Left cardiac atrium (tissue), 4 donors: ENCODE measurements at regions of chr10 and their contacts with region 1.

Region 1: DNA sequence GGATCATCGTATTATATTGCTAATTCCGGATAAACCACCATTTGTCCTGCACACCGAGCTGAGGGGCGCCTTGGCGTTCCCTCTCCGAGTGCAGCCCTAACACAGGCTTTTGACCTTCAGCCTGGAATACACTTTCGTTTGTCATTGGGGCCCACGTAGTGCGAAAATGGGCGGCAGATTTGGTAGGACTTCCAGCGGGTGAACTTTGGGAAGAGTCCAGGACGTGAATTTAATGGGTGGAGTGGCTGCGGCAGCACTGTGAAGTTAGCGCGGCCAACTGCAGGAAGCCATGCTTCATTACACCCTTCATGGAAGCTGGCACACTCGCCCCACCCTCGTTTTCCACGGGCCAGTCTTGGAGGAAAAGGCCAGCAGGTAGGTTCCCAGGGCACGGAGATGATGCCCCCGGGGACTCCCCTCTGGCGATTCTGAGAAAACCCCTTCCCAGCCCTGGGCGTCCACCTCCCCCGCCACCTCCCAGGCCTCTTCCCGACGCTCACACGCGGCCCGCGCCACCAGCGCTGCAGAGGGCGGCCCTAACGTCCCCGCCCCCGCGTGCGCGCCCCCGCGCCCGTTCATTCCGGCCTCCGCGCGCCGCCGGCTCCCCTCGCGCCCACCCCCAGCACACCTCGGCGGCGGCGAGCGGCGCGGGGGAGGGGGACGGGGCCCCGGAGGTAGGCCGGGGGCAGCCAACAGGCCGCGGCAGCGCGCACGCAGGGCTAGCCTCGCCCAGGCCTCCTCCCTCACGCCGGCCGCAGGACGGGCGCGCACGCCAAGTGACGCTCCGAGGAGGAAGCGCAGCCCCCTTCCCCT is at the start of gene MLLT10:
- DNase-seq: peak; percentile 95
- ATAC-seq: peak; percentile 95 to 98
- total RNA-seq, gene MLLT10: 26.1 to 30.3 TPM

Region 2: DNA sequence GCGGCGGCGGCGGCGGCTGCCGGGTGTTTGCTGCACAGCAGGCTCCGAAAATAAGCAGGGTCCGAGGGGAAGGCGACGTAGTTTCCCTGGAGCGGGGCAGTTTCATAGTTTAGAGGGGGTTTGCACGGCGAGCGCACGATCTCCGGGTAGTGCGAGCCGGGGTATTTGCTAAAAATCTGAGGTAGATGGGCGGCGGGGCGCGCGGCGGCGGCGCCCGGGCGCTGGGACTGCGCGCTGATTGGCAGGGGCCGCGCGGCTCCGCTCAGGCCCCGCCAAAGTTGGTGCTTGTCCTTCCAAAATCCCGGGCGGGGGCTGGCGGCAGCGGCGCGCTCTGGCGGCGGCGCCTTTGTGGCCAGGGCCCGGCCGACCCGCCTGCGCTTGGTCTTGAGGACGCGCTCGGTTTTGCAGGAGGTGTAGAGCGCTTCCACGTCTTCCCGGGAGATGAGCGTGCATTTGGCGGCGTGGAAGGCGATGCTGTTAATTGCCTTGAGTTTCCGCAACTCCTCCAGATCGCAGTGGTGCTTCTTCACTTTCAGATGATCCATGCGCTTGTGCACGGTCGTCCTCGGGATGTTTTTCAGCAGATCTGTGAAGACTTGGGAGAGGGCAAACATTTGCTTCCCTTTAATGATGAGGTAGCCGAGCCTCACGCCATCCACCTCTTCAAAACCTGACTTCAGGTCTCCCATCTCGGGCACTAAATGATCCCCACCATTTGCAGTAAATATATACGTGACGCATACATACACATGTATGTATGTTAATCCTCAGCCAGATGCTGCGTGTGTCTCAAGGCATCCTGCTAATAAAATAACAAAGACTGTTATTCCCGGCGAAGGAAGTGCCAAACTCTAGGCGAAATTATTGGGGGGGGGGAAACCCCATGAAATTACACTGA is 16.3 kb before region 1 on chr10:
- intact Hi-C with region 1: loop called in 1 of 2 experiments (anchors 1 kb)
- DNase-seq: peak; percentile 72
- ATAC-seq: peak; percentile 69 to 81

Region 3: DNA sequence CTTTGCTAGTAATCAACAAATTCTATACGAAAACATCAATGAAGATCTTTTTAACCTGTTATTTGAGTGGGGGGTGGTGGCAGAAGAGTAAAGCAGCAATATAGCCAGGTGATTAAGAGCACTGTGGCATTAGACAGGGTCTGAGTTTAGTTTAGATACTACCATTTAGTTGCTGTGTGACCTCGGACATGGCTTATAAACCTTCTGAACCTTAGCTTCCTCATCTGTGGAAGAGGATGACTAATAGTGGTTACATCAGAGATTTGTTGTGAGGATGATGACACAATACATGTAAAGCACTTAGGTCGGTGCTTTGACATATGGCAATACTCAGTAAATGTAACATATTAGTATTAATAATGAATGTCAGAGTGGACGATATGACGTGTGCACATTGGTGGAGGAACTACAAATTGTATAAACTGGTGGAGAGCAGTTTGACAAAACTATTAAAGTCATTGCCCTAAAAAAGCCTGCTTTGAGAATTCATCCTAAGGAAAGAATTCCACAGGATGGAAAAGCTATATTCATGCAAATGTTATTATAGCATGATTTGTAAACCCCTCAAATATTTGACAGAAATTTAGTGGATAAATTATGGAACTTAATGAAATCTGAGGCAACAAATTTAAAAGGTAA is 835.9 kb after region 1 on chr10:
- intact Hi-C with region 1: no loop called
- DNase-seq: no peak
- ATAC-seq: peak in 1 of 2 donors; percentile 41